GM10248 (cell line): ENCODE measurements at regions of chr1 and their contacts with region 1.

Region 1: DNA sequence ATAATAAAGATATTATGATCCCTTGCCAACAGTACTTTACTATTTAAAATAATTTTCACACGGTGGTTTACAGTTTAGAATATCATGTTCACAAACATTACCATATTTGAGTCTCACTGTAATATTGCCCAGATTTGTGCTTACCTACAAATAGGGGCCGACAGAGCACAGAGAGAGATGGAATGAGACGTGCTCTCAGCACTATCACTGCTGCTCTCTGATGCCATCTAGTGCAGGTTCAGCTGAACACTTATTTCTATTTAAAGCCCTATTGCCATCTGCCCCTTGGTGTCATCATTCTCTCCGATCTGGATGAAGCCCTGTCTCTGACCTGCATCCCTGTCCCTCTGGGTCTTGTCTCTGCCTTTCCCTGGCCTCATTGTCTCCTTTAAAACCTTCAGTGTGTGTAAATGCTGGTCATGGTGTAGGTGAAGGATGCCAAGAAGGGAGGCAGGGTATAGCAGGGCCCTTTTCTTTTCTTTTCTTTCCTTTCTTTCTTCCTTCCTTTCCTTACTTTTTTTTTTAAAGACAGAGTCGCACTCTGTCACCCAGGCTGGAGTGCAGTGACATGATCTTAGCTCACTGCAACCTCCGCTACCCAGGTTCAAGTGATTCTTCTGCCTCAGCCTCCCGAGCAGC is 6.9 kb upstream of the GPATCH4 start:
- DNase-seq: peak; percentile 70
- CTCF ChIP-seq: peak; percentile 74

Region 2: DNA sequence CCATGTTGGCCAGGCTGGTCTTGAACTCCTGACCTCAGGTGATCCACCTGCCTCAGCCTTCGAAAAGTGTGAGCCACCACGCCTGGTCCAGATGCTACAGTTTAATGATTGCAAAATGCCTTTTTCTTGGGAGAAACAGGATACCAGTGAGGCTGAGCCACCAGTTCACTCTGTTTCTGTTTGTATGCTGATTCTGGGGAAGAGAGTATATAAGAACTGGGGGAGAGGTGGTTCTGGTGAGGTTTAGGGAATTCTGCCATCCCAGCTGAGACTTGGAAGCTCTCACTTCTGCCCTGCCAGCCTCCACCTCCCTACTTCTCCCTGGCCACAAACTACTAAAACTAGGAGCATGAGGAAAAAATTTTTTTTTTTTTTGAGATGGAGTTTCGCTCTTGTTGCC is 403.5 kb before region 1 on chr1:
- CTCF ChIA-PET with region 1: no interaction called
- POLR2A ChIA-PET with region 1: no interaction called
- DNase-seq: no peak
- CTCF ChIP-seq: no peak

Region 3: GRCh38 chr1:156456622-156457465 is 151.3 kb before region 1 on chr1:
- CTCF ChIA-PET with region 1: interaction called, 12 read pairs
- POLR2A ChIA-PET with region 1: no interaction called
- DNase-seq: peak; percentile 98
- CTCF ChIP-seq: no peak

Region 4: GRCh38 chr1:156584813-156585212 is 23.3 kb before region 1 on chr1:
- CTCF ChIA-PET with region 1: interaction called, 24 read pairs
- POLR2A ChIA-PET with region 1: no interaction called
- DNase-seq: no peak
- CTCF ChIP-seq: peak; percentile 37

Region 5: GRCh38 chr1:156591432-156592157 is 16.6 kb before region 1 on chr1 and contains the start of gene NAXE:
- CTCF ChIA-PET with region 1: interaction called, 33 read pairs
- POLR2A ChIA-PET with region 1: no interaction called
- DNase-seq: peak; percentile 89
- CTCF ChIP-seq: no peak

Region 6: DNA sequence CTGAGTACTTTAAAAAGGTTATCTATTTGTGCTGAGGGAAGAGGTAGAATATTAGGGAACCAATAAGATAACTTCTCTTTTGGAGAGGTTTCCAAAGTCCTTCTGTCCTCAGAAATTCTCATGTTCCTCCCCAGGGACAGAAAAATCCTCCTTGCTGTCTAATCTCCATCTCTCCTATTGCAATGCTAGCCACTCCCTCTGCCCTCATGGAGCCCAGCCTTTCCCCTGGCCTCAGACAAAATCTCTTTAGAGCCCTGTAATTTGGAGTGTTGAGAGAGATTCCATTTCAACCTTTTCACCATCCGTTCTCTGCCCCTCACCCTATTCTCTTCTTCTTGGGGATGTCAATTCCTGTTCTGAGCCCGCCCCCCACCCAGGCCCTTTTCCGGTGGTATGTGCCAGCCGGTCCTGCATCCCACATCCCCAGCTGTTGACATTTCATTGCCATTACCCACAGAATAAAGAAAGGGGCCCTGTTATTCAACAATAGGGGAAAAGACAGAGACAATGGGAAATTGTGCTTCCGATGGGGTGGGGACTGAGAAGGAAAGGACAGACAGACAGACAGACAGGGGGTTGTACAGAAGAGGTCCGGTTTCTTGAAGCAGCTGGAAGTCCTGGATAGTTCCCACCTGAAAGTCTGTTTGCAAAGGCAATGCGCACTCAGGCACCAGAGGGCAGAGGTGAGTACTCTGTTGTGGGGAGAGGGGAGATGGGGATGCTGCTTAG is 10.9 kb after region 1 on chr1 and contains the start of gene HAPLN2:
- CTCF ChIA-PET with region 1: interaction called, 91 read pairs
- POLR2A ChIA-PET with region 1: no interaction called
- DNase-seq: peak; percentile 27
- CTCF ChIP-seq: peak; percentile 45